B cell (primary cell): ENCODE measurements at regions of chr11 and their contacts with region 1.

Region 1: GRCh38 chr11:75802913-75803820 is 11.8 kb upstream of the UVRAG start:
- DNase-seq: peak; percentile 82
- ATAC-seq: peak; percentile 94
- H3K4me3 ChIP-seq: no peak overlapping the region
- H3K4me3 Mint-ChIP-seq: no peak overlapping the region
- H3K27ac ChIP-seq: no peak overlapping the region
- H3K27ac Mint-ChIP-seq: peak overlapping the region; percentile 32
- H3K4me1 ChIP-seq: peaks cover 3 to 22% of the 10 kb centered on the region in 2 donors
- H3K4me1 Mint-ChIP-seq: peaks cover 17% of the 10 kb centered on the region
- H3K27me3 ChIP-seq: no peaks in the 10 kb centered on the region
- H3K27me3 Mint-ChIP-seq: no peaks in the 10 kb centered on the region
- CTCF ChIP-seq: peak; percentile 96

Region 2: DNA sequence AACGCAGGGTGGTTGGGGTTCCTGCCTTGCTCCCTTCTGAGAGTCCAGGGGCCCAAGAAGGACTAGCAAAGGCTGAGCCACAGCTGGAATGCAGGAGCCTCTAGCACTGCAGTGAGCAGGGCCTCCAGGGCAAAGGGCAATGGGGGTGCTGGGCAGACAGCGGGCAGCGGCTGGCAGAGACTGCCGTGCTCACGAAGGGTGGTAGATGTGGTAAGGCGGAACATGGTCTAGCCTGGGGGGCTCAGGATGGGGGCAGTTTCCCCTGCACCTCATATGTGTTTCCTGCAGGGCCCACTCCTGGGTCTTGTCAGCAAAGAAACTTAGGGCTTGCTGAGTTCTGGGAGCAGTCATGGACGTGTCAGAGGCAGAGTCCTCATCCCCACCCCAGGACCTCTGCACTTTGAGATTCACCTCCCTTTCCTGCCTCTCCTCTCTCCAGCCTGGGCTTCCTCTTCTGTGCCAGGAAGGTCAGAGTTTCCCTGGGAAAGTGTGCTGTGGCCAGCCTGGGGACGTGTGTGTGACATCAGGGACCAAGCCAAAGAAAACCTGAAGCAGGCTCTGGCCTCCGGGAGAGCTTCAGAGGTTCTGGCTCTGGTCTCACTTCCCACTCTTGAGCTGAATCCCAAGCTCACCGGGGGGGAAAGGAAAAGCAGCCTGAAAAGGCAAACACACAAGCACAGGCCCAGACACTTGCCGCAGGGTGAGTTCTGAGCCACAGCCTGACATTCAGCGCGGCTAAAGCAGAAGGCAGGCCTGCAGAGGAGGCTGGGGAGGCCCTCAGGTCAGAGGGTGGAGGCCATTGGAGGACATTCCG is 81.1 kb before region 1 on chr11:
- CTCF ChIA-PET with region 1: interaction called, 10 read pairs
- POLR2A ChIA-PET with region 1: no interaction called
- intact Hi-C with region 1: no loop called
- DNase-seq: no peak
- ATAC-seq: no peak
- H3K4me3 ChIP-seq: no peak overlapping the region
- H3K4me3 Mint-ChIP-seq: no peak overlapping the region
- H3K27ac ChIP-seq: no peak overlapping the region
- H3K27ac Mint-ChIP-seq: no peak overlapping the region
- H3K4me1 ChIP-seq: no peaks in the 10 kb centered on the region
- H3K4me1 Mint-ChIP-seq: no peaks in the 10 kb centered on the region
- H3K27me3 ChIP-seq: no peaks in the 10 kb centered on the region
- H3K27me3 Mint-ChIP-seq: no peaks in the 10 kb centered on the region
- CTCF ChIP-seq: no peak

Region 3: GRCh38 chr11:75814686-75815344 is 11.6 kb after region 1 on chr11 and contains the start of gene UVRAG:
- CTCF ChIA-PET with region 1: interaction called, 54 read pairs
- POLR2A ChIA-PET with region 1: no interaction called
- intact Hi-C with region 1: loop called (anchors 1 kb)
- DNase-seq: peak; percentile 100
- ATAC-seq: peak; percentile 84
- H3K4me3 ChIP-seq: peak within 1 kb of the TSS; percentile 80 to 98 (median 95)
- H3K4me3 Mint-ChIP-seq: no peak within 1 kb of the TSS
- H3K27ac ChIP-seq: peak within 1 kb of the TSS; percentile 93 to 97
- H3K27ac Mint-ChIP-seq: peak within 1 kb of the TSS; percentile 99
- H3K4me1 ChIP-seq: peaks cover 37 to 63% of the 10 kb centered on the region in 2 donors
- H3K4me1 Mint-ChIP-seq: peaks cover 48% of the 10 kb centered on the region
- H3K27me3 ChIP-seq: no peaks in the 10 kb centered on the region
- H3K27me3 Mint-ChIP-seq: no peaks in the 10 kb centered on the region
- CTCF ChIP-seq: no peak
- total RNA-seq, gene UVRAG: 94.1 and 115 TPM in 2 replicates

Region 4: GRCh38 chr11:75836417-75836816 is 33.2 kb after region 1 on chr11:
- CTCF ChIA-PET with region 1: interaction called, 18 read pairs
- POLR2A ChIA-PET with region 1: no interaction called
- intact Hi-C with region 1: loop called (anchors 5 kb)
- DNase-seq: peak; percentile 46
- ATAC-seq: peak; percentile 72
- H3K4me3 ChIP-seq: no peak overlapping the region
- H3K4me3 Mint-ChIP-seq: peak overlapping the region; percentile 36
- H3K27ac ChIP-seq: peak overlapping the region; percentile 39 to 76
- H3K27ac Mint-ChIP-seq: peak overlapping the region; percentile 73
- H3K4me1 ChIP-seq: peaks cover 61 to 75% of the 10 kb centered on the region in 2 donors
- H3K4me1 Mint-ChIP-seq: peaks cover 91% of the 10 kb centered on the region
- H3K27me3 ChIP-seq: no peaks in the 10 kb centered on the region
- H3K27me3 Mint-ChIP-seq: no peaks in the 10 kb centered on the region
- CTCF ChIP-seq: no peak

Region 5: GRCh38 chr11:75878933-75879332 is 75.8 kb after region 1 on chr11:
- CTCF ChIA-PET with region 1: interaction called, 405 read pairs
- POLR2A ChIA-PET with region 1: no interaction called
- intact Hi-C with region 1: no loop called
- DNase-seq: no peak
- ATAC-seq: no peak
- H3K4me3 ChIP-seq: no peak overlapping the region
- H3K4me3 Mint-ChIP-seq: no peak overlapping the region
- H3K27ac ChIP-seq: peak overlapping the region in 1 of 2 donors; percentile 19
- H3K27ac Mint-ChIP-seq: peak overlapping the region; percentile 55
- H3K4me1 ChIP-seq: peaks cover 18 to 21% of the 10 kb centered on the region in 2 donors
- H3K4me1 Mint-ChIP-seq: peaks cover 41% of the 10 kb centered on the region
- H3K27me3 ChIP-seq: no peaks in the 10 kb centered on the region
- H3K27me3 Mint-ChIP-seq: no peaks in the 10 kb centered on the region
- CTCF ChIP-seq: no peak

Region 6: GRCh38 chr11:75896843-75897419 is 93.8 kb after region 1 on chr11:
- CTCF ChIA-PET with region 1: interaction called, 31 read pairs
- POLR2A ChIA-PET with region 1: no interaction called
- intact Hi-C with region 1: no loop called
- DNase-seq: peak; percentile 52
- ATAC-seq: no peak
- H3K4me3 ChIP-seq: no peak overlapping the region
- H3K4me3 Mint-ChIP-seq: no peak overlapping the region
- H3K27ac ChIP-seq: peak overlapping the region in 1 of 2 donors; percentile 6
- H3K27ac Mint-ChIP-seq: no peak overlapping the region
- H3K4me1 ChIP-seq: peaks cover 19% of the 10 kb centered on the region in 2 donors
- H3K4me1 Mint-ChIP-seq: peaks cover 41% of the 10 kb centered on the region
- H3K27me3 ChIP-seq: no peaks in the 10 kb centered on the region
- H3K27me3 Mint-ChIP-seq: no peaks in the 10 kb centered on the region
- CTCF ChIP-seq: peak; percentile 87

Region 7: GRCh38 chr11:76056876-76057275 is 253.7 kb after region 1 on chr11:
- CTCF ChIA-PET with region 1: no interaction called
- POLR2A ChIA-PET with region 1: no interaction called
- intact Hi-C with region 1: no loop called
- DNase-seq: no peak
- ATAC-seq: no peak
- H3K4me3 ChIP-seq: no peak overlapping the region
- H3K4me3 Mint-ChIP-seq: no peak overlapping the region
- H3K27ac ChIP-seq: no peak overlapping the region
- H3K27ac Mint-ChIP-seq: peak overlapping the region; percentile 28
- H3K4me1 ChIP-seq: no peaks in the 10 kb centered on the region
- H3K4me1 Mint-ChIP-seq: peaks cover 21% of the 10 kb centered on the region
- H3K27me3 ChIP-seq: no peaks in the 10 kb centered on the region
- H3K27me3 Mint-ChIP-seq: no peaks in the 10 kb centered on the region
- CTCF ChIP-seq: no peak

Region 8: DNA sequence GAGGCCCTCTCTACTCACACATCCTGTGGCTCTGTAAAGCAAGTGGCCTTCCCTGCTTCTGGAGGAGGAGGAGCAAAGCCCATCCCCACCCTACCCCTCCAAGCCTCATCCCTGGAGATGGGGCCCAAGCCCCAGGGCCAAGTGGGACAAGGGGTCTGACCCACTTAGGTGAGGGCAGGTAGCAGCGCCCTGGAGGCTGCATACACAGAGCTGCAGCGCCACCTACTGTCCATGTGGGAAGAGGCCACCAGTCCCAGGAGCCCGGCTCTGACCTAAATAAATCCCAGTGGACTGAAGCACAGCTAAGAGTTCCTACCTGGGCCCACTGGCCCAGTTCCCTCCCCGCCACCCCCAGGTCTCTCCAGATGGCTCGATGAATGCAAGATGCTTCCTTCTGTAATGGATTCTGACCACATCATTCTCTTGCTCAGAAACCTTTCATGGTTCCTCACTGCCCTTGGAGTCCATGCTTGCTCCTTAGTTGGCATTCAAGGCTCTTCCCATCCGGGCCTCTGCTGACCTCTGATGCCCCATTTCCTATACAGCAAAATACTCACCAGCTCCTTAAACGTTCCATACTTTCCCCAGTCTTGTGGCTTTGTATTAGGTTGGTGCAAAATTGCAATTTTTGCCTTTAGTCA is 515.7 kb after region 1 on chr11:
- CTCF ChIA-PET with region 1: interaction called, 24 read pairs
- POLR2A ChIA-PET with region 1: no interaction called
- intact Hi-C with region 1: no loop called
- DNase-seq: peak; percentile 88
- ATAC-seq: peak; percentile 96
- H3K4me3 ChIP-seq: no peak overlapping the region
- H3K4me3 Mint-ChIP-seq: no peak overlapping the region
- H3K27ac ChIP-seq: no peak overlapping the region
- H3K27ac Mint-ChIP-seq: no peak overlapping the region
- H3K4me1 ChIP-seq: no peaks in the 10 kb centered on the region
- H3K4me1 Mint-ChIP-seq: no peaks in the 10 kb centered on the region
- H3K27me3 ChIP-seq: peaks cover 0 to 33% (median 19%) of the 10 kb centered on the region in 4 experiments
- H3K27me3 Mint-ChIP-seq: peaks cover 33% of the 10 kb centered on the region
- CTCF ChIP-seq: peak; percentile 86